CD8-positive, alpha-beta T cell (primary cell): ENCODE measurements at regions of chr11 and their contacts with region 1.

Region 1: GRCh38 chr11:18115360-18116127 is 9.7 kb upstream of the SAAL1 start:
- DNase-seq: peak; percentile 10 to 77 (median 66)
- ATAC-seq: peak; percentile 93
- H3K4me3 ChIP-seq: no peak overlapping the region
- H3K4me3 Mint-ChIP-seq: no peak overlapping the region
- H3K27ac ChIP-seq: no peak overlapping the region
- H3K27ac Mint-ChIP-seq: no peak overlapping the region
- H3K4me1 ChIP-seq: no peaks in the 10 kb centered on the region
- H3K4me1 Mint-ChIP-seq: peaks cover 3% of the 10 kb centered on the region
- H3K27me3 ChIP-seq: peaks cover 0 to 4% of the 10 kb centered on the region in 2 experiments
- H3K27me3 Mint-ChIP-seq: peaks cover 24% of the 10 kb centered on the region
- CTCF ChIP-seq: peak; percentile 73

Region 2: GRCh38 chr11:18091731-18092130 is 23.8 kb before region 1 on chr11:
- CTCF ChIA-PET with region 1: interaction called, 19 read pairs
- POLR2A ChIA-PET with region 1: no interaction called
- intact Hi-C with region 1: no loop called
- DNase-seq: no peak
- ATAC-seq: no peak
- H3K4me3 ChIP-seq: no peak overlapping the region
- H3K4me3 Mint-ChIP-seq: no peak overlapping the region
- H3K27ac ChIP-seq: no peak overlapping the region
- H3K27ac Mint-ChIP-seq: no peak overlapping the region
- H3K4me1 ChIP-seq: no peaks in the 10 kb centered on the region
- H3K4me1 Mint-ChIP-seq: peaks cover 3% of the 10 kb centered on the region
- H3K27me3 ChIP-seq: no peaks in the 10 kb centered on the region
- H3K27me3 Mint-ChIP-seq: no peaks in the 10 kb centered on the region
- CTCF ChIP-seq: no peak

Region 3: DNA sequence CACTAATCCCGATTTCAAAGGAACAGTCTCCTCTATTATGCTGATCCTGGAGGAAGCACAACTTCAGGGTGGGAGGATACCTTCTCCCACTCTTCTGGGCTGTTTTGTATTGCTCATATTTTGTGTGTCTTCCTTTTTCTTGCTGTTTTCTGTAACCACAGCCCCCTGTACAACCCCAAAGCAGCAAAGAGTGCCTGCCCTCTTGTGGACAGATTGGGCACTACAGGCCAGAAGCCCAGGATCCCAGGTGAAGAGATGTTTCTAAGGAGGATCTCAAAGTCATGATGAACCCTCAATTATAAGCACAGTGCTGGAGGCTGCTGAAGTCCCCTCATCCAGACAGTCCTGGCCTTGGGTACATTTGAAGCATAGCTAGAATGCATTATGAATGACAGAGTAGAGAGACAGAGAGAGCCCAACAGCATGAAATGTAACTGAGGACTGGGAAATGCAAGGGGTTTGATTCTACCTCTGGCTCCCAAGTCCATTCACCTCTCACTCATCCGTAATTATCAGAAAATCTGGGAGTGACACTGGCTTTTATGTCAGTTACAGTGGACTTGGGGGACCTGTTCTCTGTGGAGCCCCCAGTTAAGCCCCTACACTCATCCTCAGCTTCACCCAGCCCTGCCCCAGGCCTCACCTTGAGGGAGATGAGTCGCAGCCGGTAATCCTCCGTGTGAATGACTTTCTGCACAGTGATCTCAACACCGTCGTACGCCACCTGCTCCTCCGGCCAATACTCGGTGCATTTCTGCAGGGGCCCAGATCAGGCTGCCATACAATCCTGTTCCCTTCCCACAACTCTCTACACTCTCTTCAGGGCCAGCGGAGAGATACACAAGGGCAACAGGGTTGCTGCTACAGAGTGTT is 616.6 kb after region 1 on chr11:
- CTCF ChIA-PET with region 1: interaction called, 16 read pairs
- POLR2A ChIA-PET with region 1: no interaction called
- intact Hi-C with region 1: loop called in 1 of 2 experiments (anchors 2 kb)
- DNase-seq: peak; percentile 54 to 82 (median 73)
- ATAC-seq: peak; percentile 87
- H3K4me3 ChIP-seq: no peak overlapping the region
- H3K4me3 Mint-ChIP-seq: no peak overlapping the region
- H3K27ac ChIP-seq: no peak overlapping the region
- H3K27ac Mint-ChIP-seq: no peak overlapping the region
- H3K4me1 ChIP-seq: peaks cover 9% of the 10 kb centered on the region
- H3K4me1 Mint-ChIP-seq: peaks cover 11% of the 10 kb centered on the region
- H3K27me3 ChIP-seq: no peaks in the 10 kb centered on the region
- H3K27me3 Mint-ChIP-seq: no peaks in the 10 kb centered on the region
- CTCF ChIP-seq: peak; percentile 97

Region 4: DNA sequence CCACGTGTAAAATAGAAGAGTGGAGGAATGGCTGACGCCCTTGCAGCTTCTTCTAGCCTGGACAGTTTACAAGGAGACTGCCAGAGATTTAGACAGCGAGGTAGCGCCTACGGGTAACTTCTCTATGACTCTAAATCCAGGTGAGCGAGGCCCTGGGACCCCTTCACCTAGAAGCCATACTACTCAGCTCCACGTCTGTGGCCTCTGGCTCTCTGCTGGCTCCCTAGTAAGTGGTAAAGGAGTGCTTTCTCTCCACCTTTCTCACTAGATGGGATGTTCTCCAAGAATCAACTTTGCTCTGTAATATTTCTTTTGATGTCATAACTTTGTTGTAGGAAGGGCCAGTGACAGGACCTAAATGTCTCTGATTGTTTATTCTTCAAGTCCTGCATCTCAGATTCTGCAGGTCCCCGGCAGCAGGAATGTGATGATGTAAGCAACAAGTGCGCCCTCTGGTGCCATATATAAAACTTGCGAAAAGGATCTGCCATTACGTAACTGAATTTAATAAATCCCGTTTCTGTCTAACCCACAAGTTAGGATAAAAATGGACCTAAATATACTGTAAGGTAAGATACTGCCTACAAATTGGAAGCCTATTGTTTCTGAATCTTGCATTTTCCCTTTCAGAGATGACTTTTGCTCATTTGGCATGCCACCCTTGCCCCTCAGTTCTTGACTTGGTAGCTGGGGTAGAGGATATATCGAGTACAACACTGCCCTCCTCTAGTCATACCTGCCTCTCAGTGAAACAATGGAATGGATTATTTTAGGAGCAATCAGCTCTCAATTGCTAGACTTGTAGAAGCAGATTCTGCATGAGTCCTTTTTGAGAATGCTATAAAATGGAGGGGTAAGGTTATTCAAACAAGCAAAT is 687.1 kb after region 1 on chr11:
- CTCF ChIA-PET with region 1: interaction called, 9 read pairs
- POLR2A ChIA-PET with region 1: no interaction called
- intact Hi-C with region 1: loop called in 1 of 2 experiments (anchors 1 kb)
- DNase-seq: peak in 6 of 9 experiments; percentile 15 to 64 (median 30)
- ATAC-seq: peak; percentile 34
- H3K4me3 ChIP-seq: no peak overlapping the region
- H3K4me3 Mint-ChIP-seq: no peak overlapping the region
- H3K27ac ChIP-seq: no peak overlapping the region
- H3K27ac Mint-ChIP-seq: no peak overlapping the region
- H3K4me1 ChIP-seq: no peaks in the 10 kb centered on the region
- H3K4me1 Mint-ChIP-seq: peaks cover 3% of the 10 kb centered on the region
- H3K27me3 ChIP-seq: no peaks in the 10 kb centered on the region
- H3K27me3 Mint-ChIP-seq: peaks cover 11% of the 10 kb centered on the region
- CTCF ChIP-seq: peak; percentile 60